ENCODE measurements at regions of chr1 and their contacts with region 1.

Region 1: GRCh38 chr1:219075121-219075879 is 98.4 kb upstream of the LYPLAL1 start:
- DNase-seq: no peak
- H3K4me3 ChIP-seq: no peak overlapping the region
- H3K4me3 Mint-ChIP-seq: no peak overlapping the region
- H3K27ac Mint-ChIP-seq: no peak overlapping the region
- H3K4me1 ChIP-seq: peaks cover 14% of the 10 kb centered on the region
- H3K4me1 Mint-ChIP-seq: peaks cover 7% of the 10 kb centered on the region
- H3K27me3 ChIP-seq: no peaks in the 10 kb centered on the region
- H3K27me3 Mint-ChIP-seq: no peaks in the 10 kb centered on the region
- CTCF ChIP-seq: no peak

Region 2: GRCh38 chr1:219027146-219027673 is 48.1 kb before region 1 on chr1:
- CTCF ChIA-PET with region 1: no interaction called
- POLR2A ChIA-PET with region 1: no interaction called
- intact Hi-C with region 1: no loop called
- DNase-seq: no peak
- H3K4me3 ChIP-seq: no peak overlapping the region
- H3K4me3 Mint-ChIP-seq: no peak overlapping the region
- H3K27ac Mint-ChIP-seq: no peak overlapping the region
- H3K4me1 ChIP-seq: no peaks in the 10 kb centered on the region
- H3K4me1 Mint-ChIP-seq: peaks cover 6% of the 10 kb centered on the region
- H3K27me3 ChIP-seq: no peaks in the 10 kb centered on the region
- H3K27me3 Mint-ChIP-seq: no peaks in the 10 kb centered on the region
- CTCF ChIP-seq: no peak

Region 3: DNA sequence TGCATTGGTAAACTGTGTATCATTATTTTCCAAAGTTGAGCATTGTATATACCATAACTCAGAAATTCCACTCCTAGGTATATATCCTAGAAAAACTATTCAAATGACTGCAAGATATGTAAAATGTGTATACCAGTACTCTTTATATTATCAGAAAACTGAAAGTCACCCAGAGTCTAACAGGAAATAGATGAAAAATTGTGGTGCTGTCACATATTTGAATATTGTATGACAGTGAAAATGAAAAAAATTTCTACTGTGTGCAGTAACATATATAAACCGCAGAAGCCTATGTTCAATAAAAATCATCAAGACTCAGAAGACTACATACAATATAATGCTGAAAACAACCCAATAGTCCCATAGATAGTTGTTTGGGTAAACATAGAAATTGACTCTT is 24.0 kb after region 1 on chr1:
- CTCF ChIA-PET with region 1: no interaction called
- POLR2A ChIA-PET with region 1: no interaction called
- intact Hi-C with region 1: no loop called
- DNase-seq: no peak
- H3K4me3 ChIP-seq: no peak overlapping the region
- H3K4me3 Mint-ChIP-seq: no peak overlapping the region
- H3K27ac Mint-ChIP-seq: no peak overlapping the region
- H3K4me1 ChIP-seq: no peaks in the 10 kb centered on the region
- H3K4me1 Mint-ChIP-seq: no peaks in the 10 kb centered on the region
- H3K27me3 ChIP-seq: no peaks in the 10 kb centered on the region
- H3K27me3 Mint-ChIP-seq: no peaks in the 10 kb centered on the region
- CTCF ChIP-seq: no peak

Region 4: GRCh38 chr1:219566951-219567947 is 491.9 kb after region 1 on chr1:
- CTCF ChIA-PET with region 1: no interaction called
- POLR2A ChIA-PET with region 1: no interaction called
- intact Hi-C with region 1: loop called (anchors 10 kb)
- DNase-seq: peak in 1 of 2 experiments; percentile 20
- H3K4me3 ChIP-seq: no peak overlapping the region
- H3K4me3 Mint-ChIP-seq: no peak overlapping the region
- H3K27ac Mint-ChIP-seq: no peak overlapping the region
- H3K4me1 ChIP-seq: no peaks in the 10 kb centered on the region
- H3K4me1 Mint-ChIP-seq: no peaks in the 10 kb centered on the region
- H3K27me3 ChIP-seq: no peaks in the 10 kb centered on the region
- H3K27me3 Mint-ChIP-seq: peaks cover 3% of the 10 kb centered on the region
- CTCF ChIP-seq: peak; percentile 48 to 75

Measured in Caco-2 (cell line).